Common myeloid progenitor, CD34-positive (primary cell): ENCODE measurements at regions of chr2 and their contacts with region 1.

Region 1: GRCh38 chr2:177923323-177923722 is 149.3 kb downstream of the PDE11A start:
- DNase-seq: no peak
- H3K4me3 ChIP-seq: no peak overlapping the region
- H3K27ac ChIP-seq: no peak overlapping the region
- H3K4me1 ChIP-seq: no peaks in the 10 kb centered on the region
- H3K27me3 ChIP-seq: no peaks in the 10 kb centered on the region

Region 2: DNA sequence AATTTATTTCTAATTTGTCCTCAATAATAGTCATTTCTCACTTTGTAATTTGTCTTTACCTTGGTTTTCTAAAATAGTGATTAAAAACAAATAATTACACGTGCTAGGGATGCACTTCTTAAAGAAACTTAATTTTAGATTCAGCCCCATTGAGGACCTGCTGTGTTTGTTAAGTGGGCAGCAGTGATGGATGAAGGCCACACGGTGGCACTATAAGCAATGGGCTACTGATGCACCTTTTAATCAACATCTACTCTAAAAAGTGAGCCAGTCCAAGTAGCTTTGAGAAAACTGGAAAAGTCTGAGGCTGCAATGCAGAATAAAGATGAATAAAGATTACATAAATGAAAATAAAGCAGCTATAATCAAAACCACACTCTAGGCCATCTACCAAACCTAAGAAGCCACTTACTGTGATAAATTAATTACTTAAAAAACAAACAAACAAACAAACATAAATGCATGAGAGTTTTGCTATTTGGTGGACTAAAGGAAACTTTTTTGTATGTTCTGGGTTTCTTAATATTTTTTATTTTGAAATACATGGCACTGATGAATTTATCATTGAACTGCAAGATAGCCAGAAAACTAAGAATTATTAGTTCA is 60.0 kb after region 1 on chr2:
- CTCF ChIA-PET with region 1: interaction called, 3 read pairs
- POLR2A ChIA-PET with region 1: interaction called, 10 read pairs
- DNase-seq: peak; percentile 40 to 64 (median 59)
- H3K4me3 ChIP-seq: no peak overlapping the region
- H3K27ac ChIP-seq: no peak overlapping the region
- H3K4me1 ChIP-seq: no peaks in the 10 kb centered on the region
- H3K27me3 ChIP-seq: no peaks in the 10 kb centered on the region